Breast epithelium (tissue), 4 donors: ENCODE measurements at regions of chr19 and their contacts with region 1.

Region 1: DNA sequence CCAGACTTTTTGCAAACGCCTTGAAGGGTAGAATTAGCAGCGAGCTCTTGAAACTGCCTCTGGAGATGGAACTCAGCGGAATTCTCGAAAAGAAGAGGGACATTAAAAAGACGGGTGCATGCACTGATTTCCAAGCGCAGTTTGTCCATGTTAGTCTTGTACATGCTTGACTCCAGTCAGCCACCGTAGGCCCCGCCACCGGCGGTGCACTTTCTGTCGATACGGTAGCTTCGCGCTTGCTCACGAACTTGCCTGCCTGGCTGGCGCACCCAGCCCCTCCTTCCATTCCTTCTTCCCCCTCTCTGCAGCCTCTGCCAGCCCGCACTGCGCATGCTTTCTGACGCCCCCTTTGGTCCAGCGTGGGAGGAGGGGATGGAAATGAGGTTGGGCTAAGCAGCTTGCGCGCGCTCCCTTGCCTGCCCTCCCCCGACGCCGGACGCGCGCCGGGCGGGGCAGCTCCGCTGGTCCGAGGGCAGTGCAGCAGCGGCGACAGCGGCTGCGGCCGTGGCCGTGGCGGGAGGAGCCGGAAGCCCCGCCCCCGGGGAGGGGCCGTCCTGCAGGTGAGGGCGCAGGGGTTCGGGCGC is at the start of gene ZNF575:
- DNase-seq: peak; percentile 81 to 86
- H3K4me3 ChIP-seq: peak within 1 kb of the TSS; percentile 54 to 71 (median 66)
- H3K27ac ChIP-seq: peak within 1 kb of the TSS; percentile 82 to 87
- H3K4me1 ChIP-seq: no peaks in the 10 kb centered on the region
- H3K27me3 ChIP-seq: no peaks in the 10 kb centered on the region
- CTCF ChIP-seq: no peak
- POLR2A ChIP-seq: no peak
- total RNA-seq, gene ZNF575: 0.59 to 0.98 (median 0.64) TPM

Region 2: DNA sequence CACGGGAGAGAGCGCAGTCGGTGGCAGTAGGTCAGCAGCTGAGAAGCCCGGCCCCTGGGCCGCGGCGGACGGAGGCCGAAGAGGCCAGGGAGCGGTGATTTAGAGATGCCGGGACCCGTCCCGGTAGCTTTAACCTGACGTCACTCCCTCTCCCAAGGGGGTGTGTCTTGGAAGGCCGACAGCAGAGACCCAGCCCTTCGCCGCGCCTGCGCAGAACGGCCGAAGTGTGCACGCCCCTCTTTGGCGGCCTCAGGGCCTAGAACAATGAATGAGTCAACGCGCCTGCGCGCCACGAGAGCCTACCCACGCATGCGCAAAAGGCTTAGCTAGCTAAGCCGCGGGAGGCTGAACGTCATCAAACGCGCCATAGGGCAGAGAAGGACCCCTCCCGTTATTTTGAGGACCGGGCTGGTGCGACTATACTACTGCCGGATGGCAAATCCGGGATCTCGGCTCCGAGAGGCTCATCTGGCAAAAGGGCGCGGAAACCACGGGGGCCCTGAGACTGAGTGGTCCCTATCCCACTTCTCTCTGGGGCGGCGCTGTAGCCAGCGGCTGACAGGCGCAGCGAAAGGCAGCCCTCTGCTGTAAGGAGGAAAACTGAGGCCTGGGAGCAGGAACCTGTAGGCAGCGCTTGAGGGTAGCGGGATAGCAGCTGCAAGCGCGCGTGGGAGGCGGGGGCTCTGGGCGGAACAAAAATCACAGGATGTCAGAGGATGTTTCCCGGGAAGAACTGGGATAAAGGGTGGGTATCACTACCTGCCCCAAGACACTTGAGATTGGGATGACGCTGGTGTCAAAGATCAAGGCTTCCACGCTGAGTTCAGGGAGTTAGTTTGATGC is 63.2 kb after region 1 on chr19 and contains the starts of genes IRGQ and ZNF576:
- intact Hi-C with region 1: loop called (anchors 10 kb)
- DNase-seq: peak; percentile 100
- H3K4me3 ChIP-seq: peak within 1 kb of the TSS; percentile 66 to 75 (median 71)
- H3K27ac ChIP-seq: peak within 1 kb of the TSS; percentile 98
- H3K4me1 ChIP-seq: peaks cover 9 to 13% of the 10 kb centered on the region in 2 donors
- H3K27me3 ChIP-seq: no peaks in the 10 kb centered on the region
- CTCF ChIP-seq: peak in 2 of 3 donors; percentile 19 to 25
- POLR2A ChIP-seq: peak; percentile 75
- total RNA-seq, gene IRGQ: 14.9 to 17.4 (median 16.1) TPM
- total RNA-seq, gene ZNF576: 14.2 to 18.0 (median 14.8) TPM